Naive thymus-derived CD4-positive, alpha-beta T cell (primary cell): ENCODE measurements at regions of chr11 and their contacts with region 1.

Region 1: GRCh38 chr11:35138943-35139721 is at the start of gene CD44:
- DNase-seq: peak; percentile 65 to 87 (median 73)
- ATAC-seq: peak; percentile 90
- H3K4me3 ChIP-seq: peak within 1 kb of the TSS; percentile 97
- H3K4me3 Mint-ChIP-seq: peak within 1 kb of the TSS; percentile 90 to 100 (median 96)
- H3K27ac ChIP-seq: peak within 1 kb of the TSS; percentile 88
- H3K27ac Mint-ChIP-seq: peak within 1 kb of the TSS; percentile 79 to 100 (median 95)
- H3K4me1 ChIP-seq: peaks cover 33 to 37% of the 10 kb centered on the region in 2 donors
- H3K4me1 Mint-ChIP-seq: peaks cover 43 to 60% (median 50%) of the 10 kb centered on the region in 7 donors
- H3K27me3 ChIP-seq: no peaks in the 10 kb centered on the region
- H3K27me3 Mint-ChIP-seq: peaks cover 0 to 8% (median 0%) of the 10 kb centered on the region in 5 donors
- total RNA-seq, gene CD44: 369 to 1,223 (median 784) TPM

Region 2: GRCh38 chr11:34926101-34926830 is 212.9 kb before region 1 on chr11:
- CTCF ChIA-PET with region 1: no interaction called
- POLR2A ChIA-PET with region 1: no interaction called
- intact Hi-C with region 1: loop called in 1 of 2 experiments (anchors 2 kb)
- DNase-seq: peak in 7 of 9 donors; percentile 18 to 61 (median 58)
- ATAC-seq: peak; percentile 80
- H3K4me3 ChIP-seq: no peak overlapping the region
- H3K4me3 Mint-ChIP-seq: no peak overlapping the region
- H3K27ac ChIP-seq: no peak overlapping the region
- H3K27ac Mint-ChIP-seq: peak overlapping the region in 1 of 9 donors; percentile 49
- H3K4me1 ChIP-seq: peaks cover 0 to 10% of the 10 kb centered on the region in 2 donors
- H3K4me1 Mint-ChIP-seq: peaks cover 10 to 54% (median 29%) of the 10 kb centered on the region in 7 donors
- H3K27me3 ChIP-seq: no peaks in the 10 kb centered on the region
- H3K27me3 Mint-ChIP-seq: no peaks in the 10 kb centered on the region

Region 3: GRCh38 chr11:35030716-35031213 is 108.4 kb before region 1 on chr11:
- CTCF ChIA-PET with region 1: no interaction called
- POLR2A ChIA-PET with region 1: interaction called, 11 read pairs
- intact Hi-C with region 1: no loop called
- DNase-seq: no peak
- ATAC-seq: peak; percentile 79
- H3K4me3 ChIP-seq: no peak overlapping the region
- H3K4me3 Mint-ChIP-seq: peak overlapping the region in 6 of 10 donors; percentile 15 to 75 (median 52)
- H3K27ac ChIP-seq: no peak overlapping the region
- H3K27ac Mint-ChIP-seq: peak overlapping the region in 5 of 9 donors; percentile 38 to 87 (median 78)
- H3K4me1 ChIP-seq: peaks cover 10 to 14% of the 10 kb centered on the region in 2 donors
- H3K4me1 Mint-ChIP-seq: peaks cover 31 to 58% (median 49%) of the 10 kb centered on the region in 7 donors
- H3K27me3 ChIP-seq: no peaks in the 10 kb centered on the region
- H3K27me3 Mint-ChIP-seq: peaks cover 0 to 19% (median 0%) of the 10 kb centered on the region in 5 donors

Region 4: DNA sequence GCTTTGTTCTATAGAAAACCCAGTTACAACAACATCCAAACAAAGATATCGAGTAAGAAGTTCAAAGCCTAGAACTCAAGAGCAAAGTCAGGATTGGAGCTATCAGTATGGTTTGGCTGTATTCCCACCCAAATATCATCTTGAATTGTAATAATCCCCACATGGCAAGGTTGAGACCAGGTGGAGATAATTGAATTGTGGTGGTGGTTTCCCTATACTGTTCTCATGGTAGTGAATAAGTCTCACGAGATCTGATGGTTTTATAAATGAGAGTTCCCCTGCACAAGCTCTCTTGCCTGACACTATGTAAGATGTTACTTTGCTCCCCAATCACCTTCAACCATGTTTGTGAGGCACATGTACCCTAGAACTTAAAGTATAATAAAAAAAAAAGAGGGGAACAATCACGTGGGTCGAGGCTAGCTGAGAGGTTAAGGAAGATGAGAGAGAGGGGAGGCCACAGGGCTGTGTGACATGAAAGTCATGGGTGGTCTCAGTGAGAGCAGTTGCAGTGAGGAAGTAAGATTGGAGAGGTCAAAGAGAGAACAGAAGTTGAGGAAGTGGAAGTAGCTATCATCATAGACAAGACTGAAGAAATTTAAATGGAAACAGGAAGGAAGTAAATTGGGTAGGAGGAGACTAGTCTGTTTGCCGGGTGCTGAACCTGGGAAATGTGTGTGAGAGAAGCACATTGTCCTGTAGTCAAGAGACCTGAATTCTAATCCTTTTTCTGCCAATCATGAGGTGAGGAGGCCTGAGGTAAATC is 80.3 kb before region 1 on chr11:
- CTCF ChIA-PET with region 1: interaction called, 4 read pairs
- POLR2A ChIA-PET with region 1: interaction called, 14 read pairs
- intact Hi-C with region 1: no loop called
- DNase-seq: peak in 2 of 9 donors; percentile 20
- ATAC-seq: peak; percentile 69
- H3K4me3 ChIP-seq: no peak overlapping the region
- H3K4me3 Mint-ChIP-seq: peak overlapping the region; percentile 2 to 75 (median 48)
- H3K27ac ChIP-seq: peak overlapping the region; percentile 41
- H3K27ac Mint-ChIP-seq: peak overlapping the region in 8 of 9 donors; percentile 44 to 93 (median 80)
- H3K4me1 ChIP-seq: peaks cover 19 to 24% of the 10 kb centered on the region in 2 donors
- H3K4me1 Mint-ChIP-seq: peaks cover 27 to 56% (median 44%) of the 10 kb centered on the region in 7 donors
- H3K27me3 ChIP-seq: no peaks in the 10 kb centered on the region
- H3K27me3 Mint-ChIP-seq: no peaks in the 10 kb centered on the region

Region 5: GRCh38 chr11:35126000-35126878 is 12.9 kb before region 1 on chr11:
- CTCF ChIA-PET with region 1: interaction called, 3 read pairs
- POLR2A ChIA-PET with region 1: interaction called, 16 read pairs
- intact Hi-C with region 1: loop called (anchors 1 kb)
- DNase-seq: peak in 2 of 9 donors; percentile 27 to 62
- ATAC-seq: peak; percentile 59
- H3K4me3 ChIP-seq: peak overlapping the region; percentile 17
- H3K4me3 Mint-ChIP-seq: peak overlapping the region; percentile 42 to 69 (median 60)
- H3K27ac ChIP-seq: peak overlapping the region; percentile 12
- H3K27ac Mint-ChIP-seq: peak overlapping the region; percentile 44 to 92 (median 82)
- H3K4me1 ChIP-seq: peaks cover 33 to 49% of the 10 kb centered on the region in 2 donors
- H3K4me1 Mint-ChIP-seq: peaks cover 32 to 69% (median 64%) of the 10 kb centered on the region in 7 donors
- H3K27me3 ChIP-seq: no peaks in the 10 kb centered on the region
- H3K27me3 Mint-ChIP-seq: peaks cover 0 to 8% (median 0%) of the 10 kb centered on the region in 5 donors

Region 6: DNA sequence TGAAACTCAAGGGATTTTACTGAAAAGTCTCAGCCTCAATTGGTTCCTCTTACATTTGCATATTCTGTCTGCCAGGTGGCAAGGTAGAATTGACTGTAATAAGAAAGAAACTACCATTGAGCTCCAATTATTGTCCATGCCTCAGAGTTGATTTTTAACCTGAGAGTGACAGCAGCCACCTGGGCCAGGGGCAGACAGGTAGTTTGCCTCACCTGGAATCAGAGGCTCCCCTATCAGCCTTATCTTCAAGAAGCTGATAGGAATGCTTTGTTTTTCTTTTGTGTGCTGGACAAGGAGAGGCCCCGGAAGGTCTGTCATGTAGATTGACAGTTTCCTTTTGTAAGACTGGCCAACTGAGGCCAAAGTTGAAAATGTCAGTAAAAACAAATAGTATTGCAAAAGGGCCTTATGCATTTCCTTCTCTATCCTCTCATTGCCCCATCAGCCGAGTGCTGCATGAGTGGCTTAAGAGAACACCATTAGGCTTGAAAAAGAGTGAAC is 33.9 kb after region 1 on chr11:
- CTCF ChIA-PET with region 1: interaction called, 11 read pairs
- POLR2A ChIA-PET with region 1: interaction called, 185 read pairs
- intact Hi-C with region 1: loop called (anchors 1 kb)
- DNase-seq: no peak
- ATAC-seq: no peak
- H3K4me3 ChIP-seq: peak overlapping the region; percentile 17
- H3K4me3 Mint-ChIP-seq: peak overlapping the region; percentile 37 to 94 (median 70)
- H3K27ac ChIP-seq: peak overlapping the region; percentile 94
- H3K27ac Mint-ChIP-seq: peak overlapping the region; percentile 89 to 100 (median 100)
- H3K4me1 ChIP-seq: peaks cover 93 to 94% of the 10 kb centered on the region in 2 donors
- H3K4me1 Mint-ChIP-seq: peaks cover 67 to 96% (median 95%) of the 10 kb centered on the region in 7 donors
- H3K27me3 ChIP-seq: no peaks in the 10 kb centered on the region
- H3K27me3 Mint-ChIP-seq: no peaks in the 10 kb centered on the region